Activated T-helper 1 cell treated with anti-CD3 and anti-CD28 coated beads, Interleukin-12 subunit alpha, Interleukin-12 subunit beta, Interleukin-2, Interleukin-4 antibody, amounts not matched to agents 30 ng/mL and 10 ng/mL and 1 ng/mL, durations not matched to agents 14 hours and 24 hours and 36 hours (primary cell): ENCODE measurements at regions of chr1 and their contacts with region 1.

Region 1: GRCh38 chr1:169106095-169106920 is at the start of gene ATP1B1:
- DNase-seq: peak; percentile 81
- H3K4me3 Mint-ChIP-seq: peak within 1 kb of the TSS; percentile 89
- H3K27ac Mint-ChIP-seq: peak within 1 kb of the TSS; percentile 80
- H3K4me1 Mint-ChIP-seq: peaks cover 51% of the 10 kb centered on the region
- H3K27me3 Mint-ChIP-seq: peaks cover 5% of the 10 kb centered on the region
- total RNA-seq, gene ATP1B1: 12.3 TPM in 2 replicates

Region 2: GRCh38 chr1:168466092-168466713 is 640.1 kb before region 1 on chr1:
- intact Hi-C with region 1: loop called (anchors 5 kb)
- DNase-seq: peak; percentile 18
- H3K4me3 Mint-ChIP-seq: peak overlapping the region; percentile 30
- H3K27ac Mint-ChIP-seq: peak overlapping the region; percentile 71
- H3K4me1 Mint-ChIP-seq: peaks cover 67% of the 10 kb centered on the region
- H3K27me3 Mint-ChIP-seq: no peaks in the 10 kb centered on the region

Region 3: DNA sequence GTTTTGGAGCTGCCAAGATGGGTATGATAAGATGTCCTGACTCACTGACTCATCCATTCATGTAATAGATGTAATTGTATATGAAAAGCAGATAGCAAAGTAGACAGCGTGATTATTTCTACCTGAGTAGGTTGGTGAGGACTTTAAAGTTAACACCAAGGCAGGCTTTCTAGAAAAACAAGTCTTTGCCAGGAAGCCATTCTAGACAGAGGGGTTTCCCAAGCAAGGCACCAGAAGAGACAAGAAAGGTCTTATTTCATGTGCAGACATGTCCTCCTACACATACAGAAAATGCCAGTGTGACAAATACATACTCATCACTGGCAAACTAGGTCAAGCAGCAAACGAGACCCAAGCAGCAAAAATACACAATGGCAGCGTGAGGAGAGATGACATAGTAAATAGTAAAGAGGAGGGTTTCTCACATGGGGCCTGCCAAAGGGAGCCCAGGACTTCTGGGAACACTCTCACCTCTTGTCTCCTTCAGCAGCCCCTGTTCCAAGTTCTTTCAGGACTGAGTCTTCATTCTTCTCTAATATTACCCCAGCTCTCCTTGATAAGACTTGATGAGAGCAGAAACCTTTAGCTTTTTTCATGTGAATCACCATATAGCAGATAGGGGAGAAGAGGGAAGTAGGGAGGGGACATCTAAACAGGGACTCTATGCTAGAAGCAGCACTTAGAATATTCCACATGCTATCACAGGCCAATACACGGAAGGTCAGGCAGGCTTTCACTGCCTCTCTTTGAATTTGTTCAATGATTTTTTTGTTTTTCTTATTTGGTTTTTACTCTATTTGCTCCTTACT is 114.4 kb before region 1 on chr1:
- intact Hi-C with region 1: loop called (anchors 2 kb)
- DNase-seq: no peak
- H3K4me3 Mint-ChIP-seq: peak overlapping the region; percentile 12
- H3K27ac Mint-ChIP-seq: peak overlapping the region; percentile 77
- H3K4me1 Mint-ChIP-seq: peaks cover 23% of the 10 kb centered on the region
- H3K27me3 Mint-ChIP-seq: peaks cover 6% of the 10 kb centered on the region

Region 4: GRCh38 chr1:169091480-169091941 is 14.8 kb before region 1 on chr1:
- intact Hi-C with region 1: loop called (anchors 1 kb)
- DNase-seq: no peak
- H3K4me3 Mint-ChIP-seq: no peak overlapping the region
- H3K27ac Mint-ChIP-seq: no peak overlapping the region
- H3K4me1 Mint-ChIP-seq: peaks cover 12% of the 10 kb centered on the region
- H3K27me3 Mint-ChIP-seq: peaks cover 6% of the 10 kb centered on the region

Region 5: GRCh38 chr1:169312084-169312954 is 206.0 kb after region 1 on chr1:
- intact Hi-C with region 1: loop called (anchors 5 kb)
- DNase-seq: peak; percentile 31
- H3K4me3 Mint-ChIP-seq: no peak overlapping the region
- H3K27ac Mint-ChIP-seq: peak overlapping the region; percentile 43
- H3K4me1 Mint-ChIP-seq: peaks cover 20% of the 10 kb centered on the region
- H3K27me3 Mint-ChIP-seq: no peaks in the 10 kb centered on the region

Region 6: GRCh38 chr1:170531758-170532657 is 1425.7 kb after region 1 on chr1 and contains the start of gene GORAB:
- intact Hi-C with region 1: loop called (anchors 5 kb)
- DNase-seq: peak; percentile 82
- H3K4me3 Mint-ChIP-seq: no peak within 1 kb of the TSS
- H3K27ac Mint-ChIP-seq: no peak within 1 kb of the TSS
- H3K4me1 Mint-ChIP-seq: peaks cover 8% of the 10 kb centered on the region
- H3K27me3 Mint-ChIP-seq: peaks cover 4% of the 10 kb centered on the region
- total RNA-seq, gene GORAB: 11.8 and 12.2 TPM in 2 replicates